ENCODE measurements at regions of chr15 and their contacts with region 1.

Region 1: GRCh38 chr15:65184868-65185738 is at the start of gene CLPX:
- DNase-seq: peak; percentile 94
- CTCF ChIP-seq: no peak

Region 2: DNA sequence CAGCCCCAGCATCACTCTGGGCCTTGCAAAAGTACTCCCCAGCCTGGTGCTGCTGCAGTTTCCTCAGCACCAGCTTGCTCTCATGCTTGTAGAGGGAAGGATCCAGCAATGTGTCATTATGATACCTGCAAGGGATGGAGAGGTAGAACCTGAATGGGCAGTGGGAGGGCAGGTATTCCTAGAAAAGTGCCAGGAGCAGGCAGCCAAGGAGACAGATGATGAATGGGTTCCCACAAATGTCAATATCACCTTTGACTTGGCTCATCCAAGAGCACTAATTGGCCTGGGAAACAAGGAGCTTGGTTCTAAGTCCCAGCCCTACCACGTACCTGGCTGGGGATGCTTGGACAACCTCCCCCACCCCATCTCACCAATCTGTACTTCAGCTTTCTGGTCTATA is 16.8 kb after region 1 on chr15:
- CTCF ChIA-PET with region 1: no interaction called
- POLR2A ChIA-PET with region 1: no interaction called
- DNase-seq: no peak
- CTCF ChIP-seq: no peak

Region 3: GRCh38 chr15:65298731-65299130 is 113.6 kb after region 1 on chr15:
- CTCF ChIA-PET with region 1: interaction called, 19 read pairs
- POLR2A ChIA-PET with region 1: interaction called, 10 read pairs
- DNase-seq: no peak
- CTCF ChIP-seq: no peak